T-cell (primary cell): ENCODE measurements at regions of chr20 and their contacts with region 1.

Region 1: DNA sequence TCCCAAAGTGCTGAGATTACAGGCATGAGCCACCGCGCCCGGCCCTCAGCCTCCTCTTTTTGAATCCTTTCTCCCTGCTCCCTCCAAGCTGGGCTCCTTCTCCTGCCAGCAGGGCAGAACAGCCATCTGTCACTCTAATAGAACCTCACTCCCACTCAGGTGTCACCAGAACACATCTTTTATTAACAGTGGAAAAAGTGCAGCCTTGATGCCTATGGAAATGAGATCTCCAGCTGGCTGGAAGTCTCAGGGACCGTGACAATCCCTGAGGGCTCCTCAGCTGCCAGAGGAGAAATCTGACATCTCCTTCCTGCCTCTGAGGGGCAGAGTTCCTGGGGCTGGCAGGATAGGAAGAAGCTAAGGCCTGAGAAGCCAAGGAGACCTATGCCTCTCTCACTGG is 28.0 kb downstream of the TMC2 start:
- DNase-seq: no peak
- ATAC-seq: no peak
- H3K4me3 ChIP-seq: no peak overlapping the region
- H3K4me3 Mint-ChIP-seq: no peak overlapping the region
- H3K27ac ChIP-seq: no peak overlapping the region
- H3K27ac Mint-ChIP-seq: no peak overlapping the region
- H3K4me1 ChIP-seq: no peaks in the 10 kb centered on the region
- H3K4me1 Mint-ChIP-seq: peaks cover 0 to under 1% (median 0%) of the 10 kb centered on the region in 3 donors
- H3K27me3 ChIP-seq: peaks cover 13 to 63% of the 10 kb centered on the region in 2 experiments
- H3K27me3 Mint-ChIP-seq: peaks cover 56 to 68% of the 10 kb centered on the region in 2 donors

Region 2: DNA sequence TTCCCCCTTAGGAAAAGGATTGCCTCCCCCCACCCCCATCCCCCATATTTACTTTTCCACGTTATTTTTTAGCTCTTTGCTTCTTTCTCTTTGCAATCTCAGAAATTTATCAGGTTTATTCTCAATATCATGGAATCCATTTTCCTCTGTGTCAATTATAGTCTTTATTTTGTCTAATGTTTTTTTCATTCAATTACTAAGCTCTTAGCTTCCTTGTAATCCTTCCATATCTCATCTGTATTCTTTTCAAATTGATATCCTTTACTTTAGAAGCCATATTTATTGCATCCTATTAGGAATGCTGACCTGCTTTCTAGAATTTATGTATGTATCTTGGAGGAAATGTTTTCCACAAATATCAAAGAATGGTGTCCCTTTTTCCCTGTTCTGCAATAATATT is 11.3 kb after region 1 on chr20:
- CTCF ChIA-PET with region 1: no interaction called
- POLR2A ChIA-PET with region 1: interaction called in 1 of 2 experiments, 10 read pairs
- DNase-seq: no peak
- ATAC-seq: no peak
- H3K4me3 ChIP-seq: no peak overlapping the region
- H3K4me3 Mint-ChIP-seq: no peak overlapping the region
- H3K27ac ChIP-seq: no peak overlapping the region
- H3K27ac Mint-ChIP-seq: no peak overlapping the region
- H3K4me1 ChIP-seq: no peaks in the 10 kb centered on the region
- H3K4me1 Mint-ChIP-seq: no peaks in the 10 kb centered on the region
- H3K27me3 ChIP-seq: peaks cover 2 to 32% of the 10 kb centered on the region in 2 experiments
- H3K27me3 Mint-ChIP-seq: peaks cover 31 to 53% of the 10 kb centered on the region in 2 donors